AG04450 (cell line): ENCODE measurements at regions of chr20 and their contacts with region 1.

Region 1: GRCh38 chr20:12012241-12013222 is 94.8 kb downstream of the BTBD3 start:
- DNase-seq: peak; percentile 11
- H3K4me3 ChIP-seq: no peak overlapping the region
- H3K27ac ChIP-seq: no peak overlapping the region
- H3K27me3 ChIP-seq: peaks cover 2% of the 10 kb centered on the region
- CTCF ChIP-seq: peak; percentile 96

Region 2: DNA sequence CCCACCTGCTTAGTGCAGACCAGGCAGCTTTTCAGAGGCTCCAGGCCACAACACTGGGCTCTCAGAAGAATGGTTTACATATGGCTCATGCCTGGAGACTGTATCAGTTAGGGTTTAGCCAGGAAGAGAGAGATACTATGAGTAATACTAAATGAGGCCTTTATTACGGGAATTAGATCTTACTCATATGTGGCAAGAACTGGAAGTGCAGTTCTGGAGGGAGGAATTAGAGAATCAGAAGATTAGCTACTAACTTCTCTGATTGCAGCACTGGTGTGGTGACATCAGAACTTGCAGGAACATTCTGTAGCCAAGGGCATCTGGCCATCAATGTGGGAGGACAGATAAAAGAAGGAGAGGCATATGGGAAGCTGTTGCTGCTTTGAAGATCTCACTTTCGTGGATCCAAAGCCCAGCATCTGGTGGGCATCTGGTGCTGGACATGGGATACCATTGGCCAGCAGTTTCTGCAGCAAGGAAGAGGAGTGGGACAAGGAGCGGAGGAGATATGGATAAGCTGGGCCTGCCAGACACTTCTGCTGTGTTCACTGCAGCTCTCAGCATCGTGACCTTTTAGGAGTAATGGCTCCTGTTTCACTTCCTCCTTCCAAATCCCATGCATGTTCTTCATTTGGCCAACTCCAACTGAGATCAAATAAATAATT is 153.7 kb after region 1 on chr20:
- CTCF ChIA-PET with region 1: no interaction called
- POLR2A ChIA-PET with region 1: no interaction called
- DNase-seq: peak; percentile 78
- H3K4me3 ChIP-seq: no peak overlapping the region
- H3K27ac ChIP-seq: peak overlapping the region; percentile 71
- H3K27me3 ChIP-seq: no peaks in the 10 kb centered on the region
- CTCF ChIP-seq: no peak

Region 3: GRCh38 chr20:12207875-12208274 is 195.3 kb after region 1 on chr20:
- CTCF ChIA-PET with region 1: interaction called, 11 read pairs
- POLR2A ChIA-PET with region 1: no interaction called
- DNase-seq: peak; percentile 13
- H3K4me3 ChIP-seq: no peak overlapping the region
- H3K27ac ChIP-seq: no peak overlapping the region
- H3K27me3 ChIP-seq: peaks cover 3% of the 10 kb centered on the region
- CTCF ChIP-seq: peak; percentile 83